ENCODE measurements at regions of chr7 and their contacts with region 1.

Region 1: GRCh38 chr7:64794171-64794844 is at the start of gene ZNF138:
- DNase-seq: peak; percentile 89 to 91
- H3K4me3 ChIP-seq: peak within 1 kb of the TSS; percentile 87
- H3K27ac ChIP-seq: peak within 1 kb of the TSS; percentile 30; the same call in 1 of the 2 replicates
- H3K4me1 ChIP-seq: peaks cover 9% of the 10 kb centered on the region; the same call in 1 of the 2 replicates
- H3K27me3 ChIP-seq: no peaks in the 10 kb centered on the region
- CTCF ChIP-seq: no peak
- total RNA-seq, gene ZNF138: 7.4 and 8.4 TPM in 2 replicates

Region 2: DNA sequence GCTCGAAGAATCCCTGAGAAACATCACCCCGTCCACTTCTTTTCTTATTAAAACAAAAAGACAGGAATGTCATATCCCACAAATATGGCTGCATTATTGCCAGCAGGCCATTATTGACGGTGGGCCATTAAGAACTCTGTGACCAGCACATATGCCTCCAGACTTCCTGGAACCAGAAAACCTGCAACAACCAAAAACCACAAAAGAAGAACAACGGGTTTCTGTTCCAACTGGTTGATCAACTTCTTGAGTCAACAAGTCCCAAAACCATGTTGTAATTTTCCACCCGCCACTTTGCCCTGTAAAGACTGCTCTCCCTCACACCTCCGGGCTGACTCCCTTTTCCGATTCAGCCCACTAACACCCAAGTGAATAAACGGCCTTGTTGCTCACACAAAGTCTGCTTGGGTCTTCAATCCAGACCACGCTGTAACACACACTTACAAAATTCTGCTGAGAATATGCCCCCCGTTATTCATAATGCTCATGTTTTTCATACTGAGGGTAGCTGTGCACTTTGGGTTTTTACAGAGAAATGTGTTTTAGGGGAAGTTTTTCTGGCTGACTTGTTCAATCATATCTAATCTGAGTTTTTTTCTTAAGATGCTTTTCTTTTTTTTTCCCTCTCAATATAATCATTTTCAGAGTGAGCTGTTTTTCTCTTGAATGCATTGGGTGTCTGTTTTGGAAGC is 107.7 kb before region 1 on chr7:
- CTCF ChIA-PET with region 1: no interaction called
- POLR2A ChIA-PET with region 1: no interaction called
- intact Hi-C with region 1: no loop called
- DNase-seq: peak; percentile 17 to 68
- H3K4me3 ChIP-seq: no peak overlapping the region
- H3K27ac ChIP-seq: no peak overlapping the region
- H3K4me1 ChIP-seq: peaks cover 9% of the 10 kb centered on the region
- H3K27me3 ChIP-seq: no peaks in the 10 kb centered on the region
- CTCF ChIP-seq: no peak

Region 3: DNA sequence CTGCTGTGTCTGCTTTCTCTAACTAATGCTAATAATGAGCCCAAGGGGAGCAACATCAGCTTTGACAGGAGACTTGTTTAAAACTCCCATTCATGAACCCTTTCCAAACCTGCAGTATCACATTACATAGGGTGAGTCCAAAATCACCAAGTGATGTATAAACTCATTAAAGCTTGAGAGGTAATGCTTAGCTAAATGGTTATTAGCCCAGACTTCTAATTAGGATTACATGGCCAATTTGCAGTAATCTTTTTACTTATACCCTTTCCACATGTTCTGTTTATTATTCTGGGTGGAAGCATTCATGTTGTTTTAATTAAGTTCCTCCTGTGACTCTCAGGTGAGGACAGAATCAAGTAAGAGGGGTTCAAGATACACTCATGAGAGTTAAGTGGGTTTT is 17.5 kb after region 1 on chr7:
- CTCF ChIA-PET with region 1: no interaction called
- POLR2A ChIA-PET with region 1: interaction called, 10 read pairs
- intact Hi-C with region 1: no loop called
- DNase-seq: no peak
- H3K4me3 ChIP-seq: no peak overlapping the region
- H3K27ac ChIP-seq: no peak overlapping the region
- H3K4me1 ChIP-seq: no peaks in the 10 kb centered on the region
- H3K27me3 ChIP-seq: no peaks in the 10 kb centered on the region
- CTCF ChIP-seq: no peak